ENCODE measurements at regions of chr16 and their contacts with region 1.

Region 1: DNA sequence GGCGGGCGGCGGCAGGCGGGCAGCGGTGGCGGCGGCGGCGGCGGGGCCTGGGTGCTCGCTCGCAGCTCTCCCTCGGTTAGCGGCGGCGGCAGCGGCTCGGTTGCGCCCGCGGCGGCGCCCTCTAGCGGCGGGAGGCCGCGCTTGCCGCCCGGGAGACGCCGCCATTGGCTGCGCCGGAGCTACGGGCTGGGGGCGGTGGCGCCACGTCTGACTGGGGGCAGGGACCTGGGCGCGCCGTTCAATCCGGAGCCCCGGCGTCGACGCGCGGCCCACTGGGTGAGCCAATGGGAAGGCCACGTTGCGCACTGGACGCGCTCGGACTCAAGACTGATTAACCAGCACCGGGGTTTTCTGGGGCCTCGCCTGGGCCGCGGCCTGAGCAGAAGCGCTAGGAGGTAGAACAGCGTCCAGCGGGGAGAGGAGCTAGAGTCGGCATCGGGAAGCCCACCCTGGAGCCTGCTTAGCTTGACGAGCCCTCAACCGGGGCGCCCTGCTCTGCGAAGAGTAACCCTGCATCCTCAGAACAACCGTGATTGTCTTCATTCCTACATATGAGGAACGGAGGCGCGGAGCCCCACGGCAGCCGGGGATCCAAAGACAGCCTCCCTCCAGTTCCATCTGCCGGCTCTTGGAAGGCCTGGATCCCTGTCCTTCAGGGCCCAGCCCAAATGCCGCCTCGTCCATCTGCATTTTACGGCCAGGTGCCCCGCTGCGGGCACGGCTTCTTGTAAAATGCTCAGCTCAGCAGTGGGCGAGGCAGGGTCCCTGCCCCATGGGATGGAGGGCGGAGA is at the start of gene ZC3H7A:
- DNase-seq: peak; percentile 78
- H3K4me3 ChIP-seq: peak within 1 kb of the TSS; percentile 83
- CTCF ChIP-seq: peak; percentile 65

Region 2: DNA sequence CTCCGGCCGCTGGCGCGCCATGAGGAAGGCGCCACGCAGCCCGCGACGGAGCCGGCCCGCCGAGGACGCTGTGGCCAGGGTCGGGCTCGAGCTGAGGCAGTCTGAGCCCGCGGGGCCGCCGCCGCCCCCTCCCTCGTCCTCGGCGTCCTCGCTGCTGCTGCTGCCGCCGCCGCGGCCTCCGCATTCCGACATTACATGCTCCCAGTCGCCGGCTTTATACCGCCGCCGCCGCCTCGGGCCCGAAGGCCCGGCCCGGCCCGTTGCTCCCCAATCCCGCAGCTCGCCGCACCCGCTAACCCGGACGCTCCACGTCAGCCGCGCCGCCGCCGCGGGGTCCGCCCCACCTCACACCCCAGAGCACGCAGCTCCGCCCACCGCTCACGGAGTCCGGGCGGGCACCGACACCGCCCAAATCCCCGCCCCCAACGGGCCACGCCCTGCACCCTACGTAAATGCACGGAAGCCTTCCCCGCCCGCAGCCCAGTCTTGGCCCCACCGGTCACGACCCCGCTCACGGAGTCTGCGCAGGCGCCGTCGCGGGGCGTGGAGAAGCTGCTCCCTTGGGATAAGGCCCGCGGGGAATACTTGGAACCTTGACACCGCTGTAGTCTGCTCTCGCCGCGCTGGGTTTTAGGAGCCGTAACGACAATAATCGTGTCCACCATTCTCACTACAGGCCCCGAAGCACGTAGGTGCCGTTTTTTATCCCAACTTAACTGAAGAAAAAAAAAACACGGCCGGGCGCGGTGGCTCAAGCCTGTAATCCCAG is 54.6 kb before region 1 on chr16 and contains the start of gene TXNDC11:
- CTCF ChIA-PET with region 1: interaction called, 24 read pairs
- POLR2A ChIA-PET with region 1: interaction called, 23 read pairs
- DNase-seq: peak; percentile 83
- H3K4me3 ChIP-seq: peak within 1 kb of the TSS; percentile 85
- CTCF ChIP-seq: no peak

Region 3: DNA sequence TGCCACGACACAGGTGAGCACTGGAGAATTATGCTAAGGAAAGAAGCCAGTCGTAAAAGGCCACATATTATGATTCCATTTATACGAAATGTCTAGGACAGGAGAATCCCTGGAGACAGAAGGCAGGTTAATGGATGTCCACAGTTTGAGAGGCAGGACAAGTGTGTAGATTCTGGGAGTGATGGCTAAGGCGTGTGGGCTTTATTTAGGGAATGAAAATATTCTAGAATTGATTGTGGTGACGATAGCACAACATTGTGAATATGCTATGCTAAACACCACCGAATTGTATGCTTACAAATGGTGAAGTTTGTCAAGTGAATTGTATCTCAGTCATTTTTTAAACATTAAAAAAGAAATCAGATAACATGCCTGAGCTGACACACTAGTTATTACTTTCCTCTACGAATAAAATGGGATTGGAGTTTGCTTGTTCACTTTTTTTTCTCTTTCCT is 49.4 kb before region 1 on chr16:
- CTCF ChIA-PET with region 1: interaction called, 24 read pairs
- POLR2A ChIA-PET with region 1: interaction called, 23 read pairs
- DNase-seq: no peak
- H3K4me3 ChIP-seq: no peak overlapping the region
- CTCF ChIP-seq: no peak

Region 4: DNA sequence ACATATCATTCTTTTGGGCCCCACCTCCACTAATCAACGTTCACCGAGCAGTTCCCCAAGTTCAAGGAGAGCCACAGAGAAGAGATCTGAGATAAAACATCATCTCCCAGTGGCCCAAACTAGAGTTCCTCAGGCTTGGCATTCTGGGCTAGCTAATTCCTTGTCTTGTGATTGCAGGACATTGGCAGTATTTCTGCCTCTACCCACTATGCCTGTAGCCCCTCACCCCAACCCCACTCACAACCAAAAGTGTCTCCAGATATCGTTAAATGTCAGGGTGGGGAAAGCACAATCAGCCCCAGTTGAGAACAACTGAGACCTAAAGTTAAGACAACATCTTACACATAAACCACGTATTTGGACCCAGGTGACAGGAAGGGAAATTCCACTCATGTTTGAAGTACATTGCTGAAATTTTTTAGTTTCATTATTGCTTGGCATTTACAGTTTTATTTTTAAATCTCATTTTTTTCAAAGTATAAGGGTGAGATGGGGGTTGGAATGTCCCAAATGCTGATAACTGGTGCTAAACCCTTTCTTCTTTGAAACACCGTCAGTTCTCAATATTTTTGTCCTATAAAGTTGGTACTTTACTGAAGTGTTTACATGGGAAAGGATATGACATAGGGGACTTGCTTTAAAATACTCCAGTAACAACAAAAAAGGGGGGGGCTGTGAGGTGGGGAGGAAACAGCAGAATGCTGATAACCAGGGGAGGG is 13.9 kb before region 1 on chr16:
- CTCF ChIA-PET with region 1: interaction called, 77 read pairs
- POLR2A ChIA-PET with region 1: interaction called, 10 read pairs
- DNase-seq: no peak
- H3K4me3 ChIP-seq: no peak overlapping the region
- CTCF ChIP-seq: no peak

Region 5: GRCh38 chr16:11816103-11816502 is 18.7 kb after region 1 on chr16:
- CTCF ChIA-PET with region 1: interaction called, 28 read pairs
- POLR2A ChIA-PET with region 1: interaction called, 4 read pairs
- DNase-seq: no peak
- H3K4me3 ChIP-seq: no peak overlapping the region
- CTCF ChIP-seq: no peak

Region 6: GRCh38 chr16:11833951-11834695 is 36.8 kb after region 1 on chr16:
- CTCF ChIA-PET with region 1: interaction called, 14 read pairs
- POLR2A ChIA-PET with region 1: interaction called, 5 read pairs
- DNase-seq: no peak
- H3K4me3 ChIP-seq: no peak overlapping the region
- CTCF ChIP-seq: no peak